Activated naive CD4-positive, alpha-beta T cell treated with anti-CD3 and anti-CD28 coated beads for 36 hours (primary cell): ENCODE measurements at regions of chr5 and their contacts with region 1.

Region 1: GRCh38 chr5:14706615-14707021 is 42.1 kb downstream of the OTULIN start:
- DNase-seq: peak; percentile 46
- H3K4me3 Mint-ChIP-seq: peak overlapping the region; percentile 18
- H3K27ac Mint-ChIP-seq: peak overlapping the region; percentile 94
- H3K4me1 Mint-ChIP-seq: peaks cover 75% of the 10 kb centered on the region
- H3K27me3 Mint-ChIP-seq: no peaks in the 10 kb centered on the region

Region 2: GRCh38 chr5:14685757-14686156 is 20.9 kb before region 1 on chr5:
- CTCF ChIA-PET with region 1: interaction called, 16 read pairs
- intact Hi-C with region 1: loop called (anchors 1 kb)
- DNase-seq: peak; percentile 55
- H3K4me3 Mint-ChIP-seq: peak overlapping the region; percentile 42
- H3K27ac Mint-ChIP-seq: peak overlapping the region; percentile 68
- H3K4me1 Mint-ChIP-seq: peaks cover 14% of the 10 kb centered on the region
- H3K27me3 Mint-ChIP-seq: no peaks in the 10 kb centered on the region